Activated CD8-positive, alpha-beta memory T cell treated with anti-CD3 and anti-CD28 coated beads, Interleukin-2, amount 10 ng/mL, durations not matched to agents 7 days and 5 days (primary cell): ENCODE measurements at regions of chr16 and their contacts with region 1.

Region 1: GRCh38 chr16:57462209-57462977 is at the start of gene POLR2C:
- DNase-seq: peak; percentile 94
- ATAC-seq: peak; percentile 96
- H3K4me3 Mint-ChIP-seq: peak within 1 kb of the TSS; percentile 94
- H3K27ac Mint-ChIP-seq: peak within 1 kb of the TSS; percentile 98
- H3K4me1 Mint-ChIP-seq: peaks cover 31% of the 10 kb centered on the region
- H3K27me3 Mint-ChIP-seq: no peaks in the 10 kb centered on the region
- total RNA-seq, gene POLR2C: 48.6 to 61.7 TPM

Region 2: GRCh38 chr16:57260294-57260929 is 202.0 kb before region 1 on chr16:
- CTCF ChIA-PET with region 1: no interaction called
- DNase-seq: no peak
- ATAC-seq: no peak
- H3K4me3 Mint-ChIP-seq: no peak overlapping the region
- H3K27ac Mint-ChIP-seq: peak overlapping the region; percentile 17
- H3K4me1 Mint-ChIP-seq: peaks cover 11% of the 10 kb centered on the region
- H3K27me3 Mint-ChIP-seq: no peaks in the 10 kb centered on the region

Region 3: DNA sequence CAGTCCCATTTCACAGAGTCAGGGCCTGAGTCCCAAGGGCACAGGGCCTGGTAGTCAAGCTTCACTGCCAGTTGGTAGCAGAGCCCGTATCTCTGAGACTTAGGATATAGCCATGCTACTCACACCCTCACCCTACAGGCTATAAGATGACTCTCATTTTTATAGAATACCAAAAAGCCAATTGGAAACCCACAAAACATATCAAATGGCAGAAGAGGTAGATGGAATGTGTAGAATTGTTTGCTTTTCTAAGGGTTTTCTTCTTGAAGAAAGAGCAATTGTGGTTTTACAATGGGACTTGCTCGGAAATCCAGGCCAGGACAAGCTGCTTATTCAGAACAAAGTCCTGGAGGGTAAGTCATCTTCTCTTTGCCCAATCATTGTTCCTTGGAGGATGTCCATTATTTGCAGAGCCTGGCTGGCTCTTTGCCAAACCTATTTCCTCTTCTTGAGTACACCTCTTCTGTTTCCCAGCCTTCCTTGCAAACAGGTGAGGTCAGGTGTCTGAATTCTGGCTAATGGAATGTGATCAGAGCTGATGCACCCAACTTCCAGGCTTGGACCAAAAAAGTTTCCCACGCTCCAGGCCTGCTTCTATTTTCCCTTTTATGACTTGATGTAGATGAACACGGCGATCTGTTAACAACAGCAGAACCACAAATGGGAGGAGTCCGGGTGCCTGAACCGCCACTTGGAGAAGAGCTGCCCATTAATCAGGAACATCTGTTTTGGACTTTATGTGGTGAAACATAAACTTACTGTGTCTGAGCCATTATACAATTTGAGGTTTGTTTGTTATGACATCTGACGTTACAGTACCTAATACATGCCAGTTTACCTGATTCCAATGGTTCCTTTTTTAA is 120.7 kb before region 1 on chr16:
- CTCF ChIA-PET with region 1: no interaction called
- DNase-seq: no peak
- ATAC-seq: no peak
- H3K4me3 Mint-ChIP-seq: no peak overlapping the region
- H3K27ac Mint-ChIP-seq: no peak overlapping the region
- H3K4me1 Mint-ChIP-seq: peaks cover 9% of the 10 kb centered on the region
- H3K27me3 Mint-ChIP-seq: peaks cover 47% of the 10 kb centered on the region

Region 4: DNA sequence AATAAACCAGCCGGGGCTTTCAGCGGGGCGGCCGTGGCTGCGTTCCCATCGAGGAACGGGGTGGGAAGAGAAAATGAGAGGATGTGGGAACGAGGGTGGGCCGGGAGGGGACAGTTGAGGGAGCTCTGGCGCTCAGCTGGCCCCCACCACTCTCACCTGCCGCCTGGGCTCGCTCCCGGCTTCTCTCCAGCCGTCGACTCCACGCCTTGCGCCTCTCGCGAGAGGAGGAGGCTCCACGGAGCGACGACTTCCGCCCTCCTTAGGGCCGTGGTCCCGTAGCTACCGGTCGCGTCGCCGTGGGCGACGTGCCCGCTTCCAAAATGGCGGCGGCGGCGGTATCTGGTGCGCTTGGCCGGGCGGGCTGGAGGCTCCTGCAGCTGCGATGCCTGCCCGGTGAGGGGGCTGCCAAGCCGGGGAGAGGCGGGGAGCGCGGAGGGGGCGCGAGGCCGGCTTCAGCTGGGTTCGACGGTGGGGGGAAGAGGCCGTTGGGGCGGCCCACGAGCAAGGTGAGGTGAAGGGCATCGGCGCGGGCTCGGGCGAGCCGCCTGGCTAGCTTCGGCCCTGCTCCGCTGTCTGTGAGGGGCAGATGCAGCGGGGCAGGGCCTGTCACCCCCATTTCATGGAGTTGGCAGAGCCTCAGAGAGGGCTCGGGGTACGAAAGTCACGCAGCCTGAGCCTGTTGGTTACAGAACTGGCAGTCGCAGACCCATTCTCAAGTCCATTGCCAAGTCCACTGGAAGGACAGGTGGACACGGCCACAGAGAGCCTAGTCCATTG is 15.0 kb before region 1 on chr16 and contains the starts of genes CIAPIN1 and COQ9:
- CTCF ChIA-PET with region 1: interaction called, 55 read pairs
- DNase-seq: peak; percentile 97
- ATAC-seq: peak; percentile 100
- H3K4me3 Mint-ChIP-seq: peak within 1 kb of the TSS; percentile 94
- H3K27ac Mint-ChIP-seq: peak within 1 kb of the TSS; percentile 86
- H3K4me1 Mint-ChIP-seq: peaks cover 37% of the 10 kb centered on the region
- H3K27me3 Mint-ChIP-seq: no peaks in the 10 kb centered on the region
- total RNA-seq, gene CIAPIN1: 46.5 to 62.5 TPM
- total RNA-seq, gene COQ9: 36.8 to 43.1 TPM

Region 5: DNA sequence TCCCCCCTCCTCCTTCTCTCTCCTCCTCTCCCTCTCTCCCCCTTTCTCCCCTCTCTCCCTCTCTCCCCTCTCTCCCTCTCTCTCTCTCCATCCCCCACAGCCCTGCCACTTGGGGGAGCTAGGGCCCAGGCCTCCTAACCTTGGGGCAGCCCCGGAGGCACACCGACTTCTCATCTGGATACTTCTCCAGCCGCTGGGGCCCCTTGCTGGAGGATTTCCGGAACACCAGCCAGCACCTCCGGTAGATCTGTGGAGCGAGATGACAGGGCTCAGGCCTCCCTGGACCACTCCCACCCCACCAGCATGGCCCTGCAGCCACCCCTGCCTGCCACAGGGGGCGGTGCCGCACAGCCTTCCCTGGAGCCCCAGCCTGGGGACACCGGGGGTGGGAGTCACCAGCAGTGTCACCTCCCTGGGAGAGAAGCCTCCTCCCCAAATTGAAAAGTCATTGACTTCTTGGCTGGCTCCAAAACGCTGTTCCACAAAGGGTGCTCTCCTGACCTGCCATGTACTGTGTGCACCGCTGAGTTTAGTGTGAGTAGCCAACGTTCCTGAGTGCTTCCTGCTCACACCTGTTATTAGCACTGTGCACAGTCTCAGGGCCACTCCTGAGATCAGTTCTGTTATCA is 13.4 kb after region 1 on chr16:
- CTCF ChIA-PET with region 1: interaction called, 17 read pairs
- DNase-seq: peak; percentile 93
- ATAC-seq: peak; percentile 99
- H3K4me3 Mint-ChIP-seq: peak overlapping the region; percentile 45
- H3K27ac Mint-ChIP-seq: peak overlapping the region; percentile 73
- H3K4me1 Mint-ChIP-seq: peaks cover 16% of the 10 kb centered on the region
- H3K27me3 Mint-ChIP-seq: no peaks in the 10 kb centered on the region

Region 6: DNA sequence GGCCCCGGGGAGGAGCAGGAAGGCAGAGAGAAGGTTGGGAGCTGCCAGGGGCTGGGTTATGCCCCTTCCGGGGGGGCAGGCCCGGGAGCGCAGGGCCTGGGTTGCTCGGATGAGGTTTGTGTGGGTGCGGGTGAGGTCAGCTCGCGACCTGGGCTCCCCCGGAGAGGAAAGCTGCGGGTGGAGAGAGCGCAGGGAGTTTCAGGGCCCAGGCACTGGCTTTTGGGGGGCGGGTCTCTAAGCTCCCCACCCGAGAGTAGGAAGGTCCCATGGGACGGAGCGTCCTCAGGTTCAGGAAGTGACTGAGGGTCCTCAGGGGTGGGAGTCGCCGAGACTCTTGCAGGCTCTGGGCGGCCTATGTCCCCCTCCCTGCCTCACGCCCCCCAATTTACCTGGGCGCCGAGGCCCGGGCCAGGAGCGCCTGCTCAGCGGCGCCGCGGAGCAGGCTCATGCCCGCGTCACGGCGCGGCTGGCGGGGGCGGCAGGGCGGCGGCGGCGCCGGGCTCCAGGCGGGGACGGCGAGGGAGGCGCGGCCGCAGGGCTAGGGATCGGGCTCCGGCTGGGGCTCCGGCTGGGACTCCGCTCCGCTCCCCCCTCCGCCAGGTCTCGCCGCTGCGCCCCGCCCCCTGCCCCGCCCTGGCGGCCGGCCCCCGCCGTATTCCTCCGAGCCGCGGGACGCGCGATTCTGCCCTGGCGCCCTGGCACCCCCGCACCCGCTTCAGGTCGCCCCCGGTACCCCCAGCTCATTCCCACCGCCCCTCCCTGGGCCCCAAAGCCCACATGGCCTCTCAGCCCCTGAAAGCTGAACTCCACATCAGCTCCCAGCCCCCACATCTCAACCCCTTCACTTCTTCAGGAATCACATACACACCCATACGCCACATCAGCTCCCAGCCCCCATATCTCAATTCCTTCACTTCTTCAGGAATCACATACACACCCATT is 23.8 kb after region 1 on chr16 and contains the start of gene DOK4:
- CTCF ChIA-PET with region 1: interaction called, 13 read pairs
- DNase-seq: peak; percentile 81
- ATAC-seq: peak; percentile 98
- H3K4me3 Mint-ChIP-seq: peak within 1 kb of the TSS; percentile 71
- H3K27ac Mint-ChIP-seq: peak within 1 kb of the TSS; percentile 49
- H3K4me1 Mint-ChIP-seq: peaks cover 22% of the 10 kb centered on the region
- H3K27me3 Mint-ChIP-seq: peaks cover 3% of the 10 kb centered on the region
- total RNA-seq, gene DOK4: 3.4 to 4.7 TPM